Prostate gland (tissue), 2 donors: ENCODE measurements at regions of chrX and their contacts with region 1.

Region 1: GRCh38 chrX:136322064-136322463 is 21.3 kb downstream of the ADGRG4 start:
- DNase-seq: no peak
- H3K4me3 ChIP-seq: no peak overlapping the region
- H3K27ac ChIP-seq: no peak overlapping the region
- H3K4me1 ChIP-seq: no peaks in the 10 kb centered on the region
- H3K27me3 ChIP-seq: no peaks in the 10 kb centered on the region
- CTCF ChIP-seq: no peak
- POLR2A ChIP-seq: no peak

Region 2: DNA sequence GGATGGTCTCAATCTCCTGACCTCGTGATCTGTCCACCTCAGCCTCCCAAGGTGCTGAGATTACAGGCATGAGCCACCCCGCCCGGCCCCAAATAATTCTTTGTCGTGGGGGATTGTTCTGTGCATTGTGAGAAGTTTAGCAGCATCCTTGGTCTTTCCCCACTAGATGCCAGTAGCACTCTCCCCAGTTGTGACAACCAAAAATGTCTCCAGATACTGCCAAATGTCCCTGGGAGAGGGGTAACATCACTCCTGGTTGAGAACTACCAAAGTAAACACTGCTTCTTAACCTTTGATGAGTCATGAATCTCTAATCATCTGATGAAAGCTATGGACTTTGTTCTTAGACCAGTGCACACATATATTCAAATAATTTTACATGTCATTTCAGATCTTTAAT is 74.9 kb after region 1 on chrX:
- intact Hi-C with region 1: loop called (anchors 10 kb)
- DNase-seq: no peak
- H3K4me3 ChIP-seq: no peak overlapping the region
- H3K27ac ChIP-seq: no peak overlapping the region
- H3K4me1 ChIP-seq: no peaks in the 10 kb centered on the region
- H3K27me3 ChIP-seq: no peaks in the 10 kb centered on the region
- CTCF ChIP-seq: no peak
- POLR2A ChIP-seq: no peak